ENCODE measurements at regions of chr17 and their contacts with region 1.

Region 1: GRCh38 chr17:50841949-50842354 is 6.6 kb downstream of the WFIKKN2 start:
- DNase-seq: peak; percentile 75 to 82 (median 79)
- ATAC-seq: peak; percentile 89
- H3K4me3 ChIP-seq: no peak overlapping the region
- H3K27ac ChIP-seq: no peak overlapping the region
- H3K4me1 ChIP-seq: peaks cover 6% of the 10 kb centered on the region
- H3K27me3 ChIP-seq: no peaks in the 10 kb centered on the region
- CTCF ChIP-seq: peak; percentile 61 to 96 (median 86)
- POLR2A ChIP-seq: no peak

Region 2: DNA sequence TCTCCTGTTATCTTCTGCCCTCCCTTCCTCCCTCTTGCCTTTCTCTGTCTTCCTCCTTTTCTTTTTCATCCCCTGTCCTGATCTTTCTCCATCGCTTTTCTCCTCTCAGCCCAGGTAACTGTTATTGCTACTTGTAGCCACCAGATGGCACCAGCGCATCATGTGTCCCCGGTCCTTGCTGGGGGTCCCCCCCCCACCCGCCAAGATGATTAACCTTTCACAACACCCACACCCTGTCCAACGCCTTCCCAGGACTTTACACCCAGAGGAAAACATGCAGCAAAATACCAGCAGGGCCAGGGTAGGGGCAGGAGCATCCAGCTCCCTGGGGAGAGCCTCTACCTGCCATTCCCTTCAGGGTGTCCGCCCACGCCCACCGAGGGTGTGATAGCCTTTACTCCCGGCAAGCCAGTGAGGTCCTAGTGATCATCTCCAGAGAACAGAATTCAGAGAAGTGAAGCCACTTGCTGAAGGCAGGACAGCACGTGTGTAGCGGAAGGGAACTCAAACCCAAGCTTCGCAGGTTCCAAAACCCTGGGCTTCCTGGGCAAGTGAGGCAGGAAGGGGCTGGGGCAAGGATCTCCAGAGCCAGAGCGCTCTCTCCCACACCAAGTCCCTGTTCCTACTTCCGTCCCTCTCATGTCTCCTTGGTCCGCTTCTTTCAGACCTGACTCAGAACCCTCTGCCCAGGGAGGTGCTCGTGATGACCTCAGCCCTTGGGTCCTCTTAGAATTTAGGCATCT is 980.6 kb before region 1 on chr17:
- intact Hi-C with region 1: no loop called
- DNase-seq: peak; percentile 41 to 62 (median 52)
- ATAC-seq: peak; percentile 51
- H3K4me3 ChIP-seq: no peak overlapping the region
- H3K27ac ChIP-seq: no peak overlapping the region
- H3K4me1 ChIP-seq: no peaks in the 10 kb centered on the region
- H3K27me3 ChIP-seq: no peaks in the 10 kb centered on the region
- CTCF ChIP-seq: peak; percentile 65 to 97 (median 76)
- POLR2A ChIP-seq: no peak

Region 3: DNA sequence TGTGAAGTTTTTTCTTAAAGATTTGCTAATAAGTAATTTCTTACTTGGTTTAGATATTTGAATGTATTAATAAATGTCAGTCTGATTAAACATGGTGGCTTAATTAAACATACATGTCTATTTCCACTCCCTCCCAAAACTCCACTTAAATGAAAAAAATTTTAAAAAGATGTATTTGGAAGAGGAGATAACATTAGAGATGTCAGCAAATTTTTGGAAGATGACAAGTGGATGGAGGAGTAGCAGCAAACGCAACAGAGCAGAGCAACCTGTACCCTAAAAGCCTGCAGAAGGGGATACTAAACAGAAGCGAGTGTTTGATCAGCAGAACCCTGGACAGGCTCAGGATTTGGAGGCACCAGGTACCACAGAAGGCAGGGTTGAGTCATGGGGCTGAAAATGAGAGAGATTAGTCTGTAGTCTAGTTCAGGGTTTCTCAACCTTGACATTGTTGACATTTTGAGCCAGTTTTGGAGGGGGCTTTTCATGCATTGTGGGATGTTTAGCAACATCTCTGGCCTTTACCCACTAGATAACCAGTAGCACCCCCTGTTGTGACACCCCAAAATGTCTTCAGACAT is 104.7 kb before region 1 on chr17:
- intact Hi-C with region 1: no loop called
- DNase-seq: no peak
- ATAC-seq: no peak
- H3K4me3 ChIP-seq: no peak overlapping the region
- H3K27ac ChIP-seq: no peak overlapping the region
- H3K4me1 ChIP-seq: peaks cover 30% of the 10 kb centered on the region
- H3K27me3 ChIP-seq: no peaks in the 10 kb centered on the region
- CTCF ChIP-seq: no peak
- POLR2A ChIP-seq: no peak

Region 4: DNA sequence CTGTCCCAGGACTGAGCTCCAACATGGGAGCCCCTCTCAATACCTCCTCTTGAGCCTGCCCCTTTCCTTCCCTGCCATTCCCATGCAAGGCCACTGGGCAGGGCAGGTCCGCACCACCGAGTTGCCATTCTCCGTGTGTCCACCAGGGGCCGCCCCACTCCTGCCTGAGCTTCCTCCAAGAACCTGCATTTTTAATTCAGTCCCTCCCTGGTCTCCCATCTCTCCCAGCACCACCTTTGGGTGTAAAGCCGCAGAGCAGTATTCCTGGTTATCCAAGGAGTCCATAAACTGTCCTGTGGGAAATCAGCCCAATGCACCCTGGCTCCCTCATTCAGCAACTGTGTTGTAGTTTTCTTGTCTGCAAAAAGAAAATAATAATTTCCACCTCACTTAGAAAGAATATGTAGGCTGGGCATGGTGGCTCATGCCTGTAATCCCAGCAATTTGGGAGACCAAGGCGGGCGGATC is 58.7 kb before region 1 on chr17:
- intact Hi-C with region 1: loop called (anchors 5 kb)
- DNase-seq: peak; percentile 88 to 91 (median 89)
- ATAC-seq: peak; percentile 92
- H3K4me3 ChIP-seq: no peak overlapping the region
- H3K27ac ChIP-seq: no peak overlapping the region
- H3K4me1 ChIP-seq: peaks cover 22% of the 10 kb centered on the region
- H3K27me3 ChIP-seq: no peaks in the 10 kb centered on the region
- CTCF ChIP-seq: peak; percentile 97 to 100 (median 100)
- POLR2A ChIP-seq: no peak